CD4-positive, alpha-beta T cell (primary cell): ENCODE measurements at regions of chr3 and their contacts with region 1.

Region 1: GRCh38 chr3:186534113-186534669 is 10.0 kb downstream of the CRYGS start:
- DNase-seq: peak in 5 of 14 experiments; percentile 15 to 84 (median 67)
- ATAC-seq: peak; percentile 94
- H3K4me3 ChIP-seq: no peak overlapping the region
- H3K4me3 Mint-ChIP-seq: no peak overlapping the region
- H3K27ac ChIP-seq: no peak overlapping the region
- H3K27ac Mint-ChIP-seq: peak overlapping the region; percentile 17
- H3K4me1 ChIP-seq: peaks cover 30% of the 10 kb centered on the region
- H3K4me1 Mint-ChIP-seq: peaks cover 35% of the 10 kb centered on the region
- H3K27me3 ChIP-seq: no peaks in the 10 kb centered on the region
- H3K27me3 Mint-ChIP-seq: no peaks in the 10 kb centered on the region
- CTCF ChIP-seq: no peak

Region 2: DNA sequence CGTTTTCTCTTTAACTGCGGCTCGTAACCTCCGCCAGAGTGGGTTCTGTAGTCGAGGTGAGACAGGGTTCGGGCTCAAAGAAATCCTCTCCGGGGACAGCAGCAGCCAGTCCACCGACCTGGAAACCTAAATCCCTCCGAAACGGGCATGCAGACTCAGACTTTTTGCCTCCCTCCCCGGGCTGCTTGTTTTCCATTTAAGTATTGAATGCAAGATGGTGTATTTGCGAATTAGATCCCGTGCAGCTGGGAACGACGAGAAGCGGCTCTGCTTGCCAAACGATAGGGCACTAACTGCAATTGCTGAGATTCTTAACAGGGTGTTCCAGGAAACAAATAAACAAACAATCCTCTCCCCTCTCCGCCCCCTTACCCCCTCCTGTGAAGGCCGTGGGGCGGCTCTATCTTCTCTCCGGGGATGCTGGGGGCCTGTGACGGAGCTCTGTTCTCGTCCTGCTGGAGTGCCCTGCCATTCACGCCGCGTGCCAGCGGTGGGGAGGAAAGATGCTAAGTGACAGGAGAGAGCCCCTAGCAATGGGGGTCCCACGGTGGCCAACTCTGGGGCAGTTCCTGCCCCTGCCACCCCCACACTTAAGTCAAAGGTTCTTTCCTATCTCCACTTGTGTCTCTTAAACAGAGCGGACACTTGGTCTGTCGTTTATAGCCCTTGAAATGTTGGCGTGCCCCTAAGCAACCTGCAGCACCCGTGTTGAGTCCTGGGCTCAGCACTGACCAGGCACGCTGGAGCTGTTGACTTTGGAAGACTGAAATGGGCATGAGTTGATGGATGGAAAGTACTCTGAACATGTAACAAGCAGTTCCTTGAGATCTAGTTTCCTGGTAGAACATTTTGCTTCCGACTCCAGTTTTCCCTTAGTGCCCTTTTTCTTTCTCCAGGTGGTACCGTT is 424.0 kb before region 1 on chr3:
- CTCF ChIA-PET with region 1: no interaction called
- POLR2A ChIA-PET with region 1: no interaction called
- intact Hi-C with region 1: loop called in 1 of 2 experiments (anchors 10 kb)
- DNase-seq: peak in 3 of 14 experiments; percentile 3 to 25 (median 22)
- ATAC-seq: no peak
- H3K4me3 ChIP-seq: peak overlapping the region; percentile 60
- H3K4me3 Mint-ChIP-seq: peak overlapping the region; percentile 98
- H3K27ac ChIP-seq: no peak overlapping the region
- H3K27ac Mint-ChIP-seq: no peak overlapping the region
- H3K4me1 ChIP-seq: peaks cover 41% of the 10 kb centered on the region
- H3K4me1 Mint-ChIP-seq: peaks cover 42% of the 10 kb centered on the region
- H3K27me3 ChIP-seq: peaks cover 62 to 89% of the 10 kb centered on the region in 2 experiments
- H3K27me3 Mint-ChIP-seq: peaks cover 90% of the 10 kb centered on the region
- CTCF ChIP-seq: no peak

Region 3: DNA sequence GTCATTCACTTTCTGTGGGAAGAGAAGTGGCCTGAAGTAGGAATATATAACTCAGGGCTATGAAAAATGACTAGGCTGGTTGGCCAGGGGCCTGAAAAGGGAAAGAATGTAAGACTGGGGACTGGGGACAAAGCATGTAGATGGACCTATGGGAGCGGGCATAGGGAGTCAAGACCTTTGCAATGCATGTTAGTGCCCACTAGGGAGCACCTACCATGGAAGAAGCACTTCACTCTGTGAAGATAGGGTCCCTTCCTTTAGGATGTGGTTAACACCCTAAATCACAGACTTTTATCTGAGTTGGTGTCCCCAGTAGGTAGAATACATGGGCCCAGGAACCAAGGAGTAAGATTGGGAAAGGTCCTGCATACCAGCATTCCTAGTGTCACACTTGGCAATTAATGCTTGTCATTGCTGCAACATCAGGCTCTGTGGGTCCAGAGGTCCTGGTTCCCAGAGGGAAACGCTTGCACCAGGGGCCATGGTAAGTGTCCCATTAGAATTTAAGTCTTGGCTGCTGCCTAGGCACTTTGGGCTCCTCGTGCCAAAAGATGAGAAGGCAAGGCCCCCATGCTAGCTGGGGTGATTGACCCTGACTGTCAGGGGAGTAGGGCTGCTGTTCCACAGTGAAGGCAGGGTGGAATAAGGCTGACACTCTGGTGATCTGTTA is 69.6 kb before region 1 on chr3:
- CTCF ChIA-PET with region 1: no interaction called
- POLR2A ChIA-PET with region 1: no interaction called
- intact Hi-C with region 1: loop called in 1 of 2 experiments (anchors 5 kb)
- DNase-seq: peak in 3 of 14 experiments; percentile 6 to 17 (median 10)
- ATAC-seq: no peak
- H3K4me3 ChIP-seq: no peak overlapping the region
- H3K4me3 Mint-ChIP-seq: no peak overlapping the region
- H3K27ac ChIP-seq: no peak overlapping the region
- H3K27ac Mint-ChIP-seq: no peak overlapping the region
- H3K4me1 ChIP-seq: no peaks in the 10 kb centered on the region
- H3K4me1 Mint-ChIP-seq: no peaks in the 10 kb centered on the region
- H3K27me3 ChIP-seq: no peaks in the 10 kb centered on the region
- H3K27me3 Mint-ChIP-seq: peaks cover 3% of the 10 kb centered on the region
- CTCF ChIP-seq: no peak

Region 4: GRCh38 chr3:186519021-186519658 is 15.1 kb before region 1 on chr3:
- CTCF ChIA-PET with region 1: interaction called, 19 read pairs
- POLR2A ChIA-PET with region 1: interaction called, 28 read pairs
- intact Hi-C with region 1: no loop called
- DNase-seq: peak; percentile 50 to 91 (median 60)
- ATAC-seq: peak; percentile 96
- H3K4me3 ChIP-seq: no peak overlapping the region
- H3K4me3 Mint-ChIP-seq: peak overlapping the region; percentile 46
- H3K27ac ChIP-seq: peak overlapping the region; percentile 58 to 65
- H3K27ac Mint-ChIP-seq: peak overlapping the region; percentile 78
- H3K4me1 ChIP-seq: peaks cover 74% of the 10 kb centered on the region
- H3K4me1 Mint-ChIP-seq: peaks cover 66% of the 10 kb centered on the region
- H3K27me3 ChIP-seq: no peaks in the 10 kb centered on the region
- H3K27me3 Mint-ChIP-seq: no peaks in the 10 kb centered on the region
- CTCF ChIP-seq: no peak